Heart left ventricle (tissue), 16 donors: ENCODE measurements at regions of chr2 and their contacts with region 1.

Region 1: DNA sequence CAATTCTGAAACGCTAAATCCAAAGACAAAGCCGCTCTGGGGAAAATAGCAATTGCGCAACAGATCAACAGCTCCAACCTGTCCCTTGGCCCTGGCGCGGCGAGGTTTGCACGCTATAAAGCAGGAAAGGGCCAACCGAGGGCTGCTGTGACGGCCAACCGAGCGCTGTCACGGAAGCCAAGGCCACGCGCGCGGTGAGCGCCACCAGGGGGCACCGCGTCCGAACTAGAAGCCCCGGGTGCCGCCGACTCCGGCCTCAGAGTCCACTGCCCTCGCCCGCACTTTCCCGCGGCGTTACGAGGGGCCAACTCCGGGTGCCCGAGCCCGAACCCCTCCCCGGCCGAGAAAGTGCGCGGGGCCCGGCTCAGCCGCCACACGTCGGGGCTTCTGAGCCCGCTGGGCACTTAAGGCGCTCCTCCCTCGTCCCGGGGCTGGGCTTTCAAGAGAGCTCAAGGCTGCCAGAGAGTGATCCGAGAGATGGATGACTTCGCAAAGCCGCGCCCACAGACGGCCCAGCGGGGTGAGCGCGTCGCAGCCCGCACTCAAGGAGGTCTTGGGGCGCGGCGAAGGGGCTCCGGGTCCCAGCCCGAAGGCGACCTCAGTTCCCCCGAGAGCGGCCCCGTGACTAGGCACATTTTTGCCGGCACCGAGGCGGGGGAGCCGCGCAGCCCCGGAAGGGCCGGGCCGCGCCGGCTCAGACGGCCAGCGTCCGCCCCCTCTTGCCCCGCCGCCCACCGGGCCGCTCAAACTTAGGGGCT is 897 bp downstream of the NFE2L2 start:
- DNase-seq: peak; percentile 98 to 99 (median 99)
- ATAC-seq: peak; percentile 74 to 85 (median 79)
- H3K4me3 ChIP-seq: peak overlapping the region; percentile 72 to 97 (median 90)
- H3K27ac ChIP-seq: peak overlapping the region; percentile 97 to 100 (median 99)
- H3K4me1 ChIP-seq: peaks cover 0 to 57% (median 43%) of the 10 kb centered on the region in 12 donors
- H3K27me3 ChIP-seq: no peaks in the 10 kb centered on the region
- CTCF ChIP-seq: peak; percentile 73 to 96 (median 87)
- POLR2A ChIP-seq: peak in 1 of 2 donors; percentile 58

Region 2: DNA sequence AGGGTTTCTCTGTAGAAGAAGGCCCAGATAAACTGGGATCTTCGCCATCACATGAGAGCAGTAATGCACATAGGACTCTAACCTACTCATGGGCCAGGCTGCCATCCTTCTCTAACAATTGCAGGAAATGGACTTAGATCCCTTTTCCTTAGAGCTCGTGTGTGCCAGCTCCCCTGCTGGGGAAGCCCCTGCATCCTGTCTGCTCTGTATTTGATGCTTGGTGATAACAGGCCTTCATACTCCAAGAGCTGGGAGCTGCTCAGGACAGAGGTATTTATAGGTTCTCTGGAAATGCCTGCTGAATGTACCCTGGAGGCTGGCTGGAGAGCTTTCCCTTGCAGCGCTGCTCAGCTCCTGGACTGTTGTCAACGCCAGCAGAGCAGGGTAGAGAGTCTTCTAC is 744.8 kb before region 1 on chr2:
- intact Hi-C with region 1: no loop called
- DNase-seq: peak; percentile 20 to 63 (median 60)
- ATAC-seq: peak; percentile 83 to 97 (median 95)
- H3K4me3 ChIP-seq: no peak overlapping the region
- H3K27ac ChIP-seq: no peak overlapping the region
- H3K4me1 ChIP-seq: peaks cover 0 to 25% (median 9%) of the 10 kb centered on the region in 12 donors
- H3K27me3 ChIP-seq: no peaks in the 10 kb centered on the region
- CTCF ChIP-seq: no peak
- POLR2A ChIP-seq: no peak

Region 3: DNA sequence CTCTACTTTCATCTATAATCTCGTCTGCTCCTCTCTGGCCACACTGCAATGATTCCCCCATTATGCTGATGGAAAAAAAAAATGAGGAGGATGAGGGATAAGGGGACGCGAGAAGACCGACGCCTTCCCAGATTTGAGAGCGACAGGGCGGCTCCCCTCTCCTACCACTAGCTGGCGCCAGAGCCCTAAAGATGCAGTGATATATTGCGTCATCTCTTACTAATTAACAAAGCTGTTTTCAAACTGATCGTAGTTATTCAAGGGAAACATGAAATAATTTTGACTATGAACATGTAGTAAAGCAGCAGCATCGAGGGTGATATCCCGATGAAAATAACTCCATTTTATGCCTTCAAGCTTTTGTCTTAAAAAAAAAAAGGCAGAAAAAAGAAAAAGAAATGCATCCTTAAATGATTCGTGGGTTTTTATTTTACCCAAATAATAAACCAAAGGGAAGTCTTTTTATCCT is 99.0 kb before region 1 on chr2:
- intact Hi-C with region 1: loop called in 9 of 10 experiments (anchors 1 to 10 kb)
- DNase-seq: peak; percentile 78 to 89 (median 81)
- ATAC-seq: peak; percentile 86 to 93 (median 89)
- H3K4me3 ChIP-seq: peak overlapping the region in 11 of 12 donors; percentile 23 to 64 (median 47)
- H3K27ac ChIP-seq: peak overlapping the region; percentile 80 to 93 (median 85)
- H3K4me1 ChIP-seq: peaks cover 5 to 28% (median 17%) of the 10 kb centered on the region in 12 donors
- H3K27me3 ChIP-seq: no peaks in the 10 kb centered on the region
- CTCF ChIP-seq: peak; percentile 99 to 100 (median 100)
- POLR2A ChIP-seq: no peak

Region 4: DNA sequence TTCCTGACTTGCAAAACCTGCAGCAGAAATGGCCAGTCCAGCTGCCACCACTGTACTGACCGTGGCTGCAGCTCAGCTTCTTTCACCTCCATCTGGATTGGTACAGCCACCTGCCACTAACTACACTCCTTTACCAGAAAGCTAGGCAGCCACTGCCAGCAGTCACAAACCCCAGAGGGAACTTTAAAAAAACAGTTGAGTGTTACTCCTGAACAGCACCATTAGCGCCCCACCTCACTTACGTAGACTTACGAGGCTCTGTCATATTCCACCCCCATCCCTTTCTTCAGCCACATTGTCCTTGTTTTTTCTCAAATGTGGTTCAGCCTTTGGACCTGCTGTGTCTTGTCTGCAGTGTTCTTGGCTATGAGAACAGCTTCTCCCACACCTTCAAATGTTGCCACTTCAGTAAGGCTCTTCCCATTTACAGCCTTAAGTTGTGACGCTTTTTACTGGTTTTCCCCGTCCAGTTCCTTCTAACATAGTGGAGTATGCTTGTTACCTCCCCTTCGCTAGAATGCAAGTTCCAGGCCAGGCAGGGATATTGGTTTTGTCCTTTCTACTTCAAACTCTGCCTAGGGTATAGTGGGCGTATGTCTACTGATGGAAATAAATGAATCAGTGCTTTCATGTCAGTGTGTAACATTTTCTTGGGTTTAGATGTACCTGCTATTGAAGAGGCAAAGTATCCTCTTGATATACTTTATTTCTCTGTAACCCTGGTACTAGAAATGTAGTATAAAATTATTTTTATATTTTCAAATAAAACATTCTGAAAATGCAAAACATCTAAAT is 34.0 kb before region 1 on chr2:
- intact Hi-C with region 1: loop called in 1 of 10 experiments (anchors 5 kb)
- DNase-seq: no peak
- ATAC-seq: peak in 2 of 4 donors; percentile 29
- H3K4me3 ChIP-seq: no peak overlapping the region
- H3K27ac ChIP-seq: peak overlapping the region in 1 of 12 donors; percentile 4
- H3K4me1 ChIP-seq: peaks cover 0 to 38% (median 10%) of the 10 kb centered on the region in 12 donors
- H3K27me3 ChIP-seq: no peaks in the 10 kb centered on the region
- CTCF ChIP-seq: no peak
- POLR2A ChIP-seq: no peak

Region 5: DNA sequence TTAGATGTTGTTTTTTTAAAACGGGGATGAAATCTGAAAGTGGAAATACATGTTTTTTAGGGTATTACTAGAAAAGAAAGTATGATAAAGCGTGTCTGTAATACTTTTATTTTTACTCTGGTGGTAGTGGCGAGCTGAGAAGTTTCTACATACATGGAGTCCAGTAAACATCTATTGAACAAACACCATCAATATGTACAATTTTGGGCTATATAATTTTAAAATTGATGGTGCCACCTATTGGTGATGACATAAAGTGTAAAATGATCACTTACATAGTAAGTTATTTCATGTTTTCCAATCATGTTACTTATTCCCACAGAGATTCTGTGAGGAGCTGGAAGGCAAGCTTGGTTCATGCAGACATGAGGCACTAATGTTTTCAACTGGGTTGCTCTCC is 32.4 kb after region 1 on chr2:
- intact Hi-C with region 1: loop called in 2 of 10 experiments (anchors 1 to 5 kb)
- DNase-seq: no peak
- ATAC-seq: peak in 2 of 4 donors; percentile 38 to 42
- H3K4me3 ChIP-seq: peak overlapping the region in 2 of 12 donors; percentile 4 to 21
- H3K27ac ChIP-seq: peak overlapping the region in 11 of 12 donors; percentile 13 to 72 (median 22)
- H3K4me1 ChIP-seq: peaks cover 0 to 14% (median 0%) of the 10 kb centered on the region in 12 donors
- H3K27me3 ChIP-seq: no peaks in the 10 kb centered on the region
- CTCF ChIP-seq: peak in 10 of 12 donors; percentile 13 to 61 (median 46)
- POLR2A ChIP-seq: no peak

Region 6: DNA sequence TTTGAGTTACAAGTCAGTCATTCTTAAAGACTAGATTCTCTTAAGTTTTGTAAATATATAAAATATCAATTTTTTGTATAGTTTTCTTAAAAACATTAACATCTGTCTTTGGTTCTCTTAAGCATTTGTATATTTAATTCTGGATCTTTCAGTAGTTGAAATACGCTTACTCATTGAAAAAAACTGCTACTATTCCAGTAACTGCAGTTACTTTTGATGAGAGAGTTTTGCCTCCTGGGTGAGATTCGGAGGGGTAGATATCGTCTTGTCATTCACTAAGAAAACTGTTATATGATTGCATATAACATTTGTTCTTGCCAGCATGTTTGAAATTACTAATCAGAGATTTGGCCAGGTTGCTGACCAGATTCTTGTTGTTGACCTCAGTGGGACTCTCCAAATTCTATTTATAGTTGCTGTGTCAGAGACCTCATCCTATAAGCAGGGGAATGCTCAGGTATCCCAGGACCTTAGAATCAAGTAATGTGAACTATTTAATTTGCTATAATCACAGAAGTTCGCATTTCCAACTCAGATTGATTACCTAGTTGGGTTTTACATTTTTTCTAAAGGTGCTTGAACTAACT is 136.8 kb after region 1 on chr2:
- intact Hi-C with region 1: loop called in 2 of 10 experiments (anchors 10 kb)
- DNase-seq: no peak
- ATAC-seq: peak in 3 of 4 donors; percentile 36 to 52 (median 51)
- H3K4me3 ChIP-seq: no peak overlapping the region
- H3K27ac ChIP-seq: peak overlapping the region in 2 of 12 donors; percentile 10 to 47
- H3K4me1 ChIP-seq: peaks cover 0 to 82% (median 42%) of the 10 kb centered on the region in 12 donors
- H3K27me3 ChIP-seq: no peaks in the 10 kb centered on the region
- CTCF ChIP-seq: no peak
- POLR2A ChIP-seq: no peak